ENCODE measurements at regions of chr11 and their contacts with region 1.

Region 1: GRCh38 chr11:111229604-111230003 is 15.9 kb upstream of the POU2AF2 start:
- DNase-seq: no peak
- ATAC-seq: no peak
- H3K4me3 ChIP-seq: no peak overlapping the region
- H3K27ac ChIP-seq: no peak overlapping the region
- H3K4me1 ChIP-seq: peaks cover 4% of the 10 kb centered on the region
- H3K27me3 ChIP-seq: no peaks in the 10 kb centered on the region
- CTCF ChIP-seq: no peak
- POLR2A ChIP-seq: no peak

Region 2: GRCh38 chr11:110453684-110454354 is 775.8 kb before region 1 on chr11:
- intact Hi-C with region 1: loop called (anchors 10 kb)
- DNase-seq: no peak
- ATAC-seq: no peak
- H3K4me3 ChIP-seq: no peak overlapping the region
- H3K27ac ChIP-seq: no peak overlapping the region
- H3K4me1 ChIP-seq: no peaks in the 10 kb centered on the region
- H3K27me3 ChIP-seq: no peaks in the 10 kb centered on the region
- CTCF ChIP-seq: no peak
- POLR2A ChIP-seq: no peak

Region 3: DNA sequence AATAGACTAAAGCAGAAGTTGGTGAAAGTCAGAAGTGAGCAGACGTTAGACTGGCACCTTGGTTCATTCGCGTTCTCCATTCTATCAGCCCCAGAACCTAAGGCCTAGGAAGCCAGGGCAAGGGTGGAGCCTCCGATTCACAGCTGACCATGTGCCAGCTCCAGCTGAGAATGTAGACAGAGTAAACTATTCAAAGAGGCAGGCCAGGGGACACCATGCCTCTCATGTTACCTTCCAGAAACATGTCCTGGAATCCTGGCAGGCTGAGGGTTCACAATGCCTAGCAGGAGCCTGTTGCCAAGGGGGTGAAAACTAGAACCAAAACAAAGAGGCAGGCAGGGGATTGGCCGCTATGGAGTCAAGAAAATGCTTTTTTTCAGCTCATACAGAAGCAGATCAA is 208.5 kb before region 1 on chr11:
- intact Hi-C with region 1: no loop called
- DNase-seq: no peak
- ATAC-seq: no peak
- H3K4me3 ChIP-seq: no peak overlapping the region
- H3K27ac ChIP-seq: no peak overlapping the region
- H3K4me1 ChIP-seq: no peaks in the 10 kb centered on the region
- H3K27me3 ChIP-seq: no peaks in the 10 kb centered on the region
- CTCF ChIP-seq: no peak
- POLR2A ChIP-seq: no peak

Measured in body of pancreas (tissue), 4 donors.